ENCODE measurements at regions of chr6 and their contacts with region 1.

Region 1: GRCh38 chr6:110873981-110874879 is at the start of gene AMD1:
- DNase-seq: peak; percentile 99
- H3K4me3 ChIP-seq: peak within 1 kb of the TSS; percentile 83 to 98 (median 90)
- H3K27ac ChIP-seq: peak within 1 kb of the TSS; percentile 94 to 97 (median 97)
- H3K4me1 ChIP-seq: peaks cover 26 to 36% (median 29%) of the 10 kb centered on the region in 4 donors
- H3K27me3 ChIP-seq: no peaks in the 10 kb centered on the region
- CTCF ChIP-seq: no peak
- EP300 ChIP-seq: no peak
- POLR2A ChIP-seq: peak; percentile 97
- total RNA-seq, gene AMD1: 46.2 to 93.1 (median 59.6) TPM

Region 2: GRCh38 chr6:109690737-109691621 is 1183.3 kb before region 1 on chr6 and contains the starts of genes AK9 and FIG4:
- intact Hi-C with region 1: loop called (anchors 10 kb)
- DNase-seq: peak; percentile 97
- H3K4me3 ChIP-seq: peak within 1 kb of the TSS; percentile 74 to 86 (median 81)
- H3K27ac ChIP-seq: peak within 1 kb of the TSS; percentile 86 to 95 (median 91)
- H3K4me1 ChIP-seq: peaks cover 6 to 32% (median 28%) of the 10 kb centered on the region in 4 donors
- H3K27me3 ChIP-seq: no peaks in the 10 kb centered on the region
- CTCF ChIP-seq: peak; percentile 16 to 33 (median 17)
- EP300 ChIP-seq: no peak
- POLR2A ChIP-seq: no peak
- total RNA-seq, gene AK9: 8.4 to 15.0 (median 10.6) TPM
- total RNA-seq, gene FIG4: 12.3 to 19.9 (median 17.1) TPM

Region 3: GRCh38 chr6:110618591-110619267 is 255.5 kb before region 1 on chr6:
- intact Hi-C with region 1: no loop called
- DNase-seq: no peak
- H3K4me3 ChIP-seq: no peak overlapping the region
- H3K27ac ChIP-seq: no peak overlapping the region
- H3K4me1 ChIP-seq: peaks cover 0 to 18% (median 3%) of the 10 kb centered on the region in 4 donors
- H3K27me3 ChIP-seq: no peaks in the 10 kb centered on the region
- CTCF ChIP-seq: no peak
- EP300 ChIP-seq: no peak
- POLR2A ChIP-seq: no peak

Region 4: DNA sequence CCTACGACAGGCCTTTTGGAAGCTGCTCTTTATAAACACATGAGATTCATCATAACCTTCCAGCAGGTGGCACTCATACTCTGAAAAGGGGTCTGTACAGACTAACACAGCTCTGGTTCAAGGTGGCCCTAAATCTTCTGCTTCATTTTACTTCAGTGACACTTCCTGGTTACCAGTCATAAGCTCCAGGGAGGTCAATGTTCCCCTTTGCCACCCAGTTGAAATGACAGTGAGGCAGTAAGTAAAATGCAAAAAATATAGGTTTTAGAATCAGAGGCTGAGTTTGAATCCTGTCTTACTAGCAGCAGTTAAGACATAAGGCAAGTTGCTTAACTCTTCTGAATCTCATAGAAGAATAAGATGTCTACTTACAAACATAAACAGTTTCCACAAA is 191.8 kb before region 1 on chr6:
- intact Hi-C with region 1: loop called (anchors 5 kb)
- DNase-seq: no peak
- H3K4me3 ChIP-seq: no peak overlapping the region
- H3K27ac ChIP-seq: no peak overlapping the region
- H3K4me1 ChIP-seq: peaks cover 0 to 10% (median 5%) of the 10 kb centered on the region in 4 donors
- H3K27me3 ChIP-seq: no peaks in the 10 kb centered on the region
- CTCF ChIP-seq: peak; percentile 65 to 73 (median 71)
- EP300 ChIP-seq: no peak
- POLR2A ChIP-seq: no peak

Region 5: DNA sequence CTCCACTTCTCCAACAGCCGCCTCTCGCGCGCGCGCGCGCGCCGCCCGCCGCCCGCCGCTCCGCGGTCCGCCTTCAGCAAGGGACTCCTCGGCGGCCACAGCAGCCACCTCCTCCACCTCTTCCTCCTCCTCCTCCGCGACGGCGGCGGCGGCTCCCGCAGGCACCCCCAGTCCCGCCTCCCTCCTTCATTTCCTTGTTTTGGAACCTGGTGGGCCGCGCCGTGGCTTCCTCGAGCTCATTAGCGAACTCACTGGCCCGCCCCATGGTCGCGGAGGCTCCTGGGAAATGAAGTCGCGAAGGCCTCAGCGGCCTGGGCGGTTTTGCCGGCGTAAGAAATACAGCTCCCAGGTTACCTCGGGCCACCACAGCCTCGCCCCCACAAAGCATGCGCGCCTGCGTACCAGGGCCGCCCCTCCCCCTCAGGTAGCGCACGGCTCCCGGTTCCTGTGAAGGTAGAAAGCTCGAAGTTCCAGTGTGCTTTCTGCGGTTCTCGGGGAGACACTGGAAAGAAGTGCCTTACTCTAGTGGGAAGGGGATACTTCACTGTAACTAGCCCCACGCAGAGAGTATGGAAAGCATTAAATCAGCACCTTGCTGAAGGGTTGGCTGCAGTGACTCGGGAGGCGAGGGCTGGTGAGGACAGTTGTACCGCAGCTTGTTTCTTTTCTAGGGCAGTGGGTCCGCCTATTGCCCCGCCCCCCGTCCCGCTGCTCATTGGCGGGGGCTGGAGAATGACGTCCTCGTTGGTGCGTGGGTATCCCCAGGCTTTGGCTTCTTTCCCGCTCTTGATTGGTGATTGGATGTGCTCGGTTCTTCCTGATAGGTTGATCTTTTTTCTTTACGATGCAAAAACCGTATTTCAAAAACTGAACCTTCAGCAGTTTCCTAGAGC is 58.8 kb before region 1 on chr6 and contains the start of gene CDK19:
- intact Hi-C with region 1: loop called (anchors 2 kb)
- DNase-seq: peak; percentile 99
- H3K4me3 ChIP-seq: peak within 1 kb of the TSS; percentile 85 to 99 (median 93)
- H3K27ac ChIP-seq: peak within 1 kb of the TSS; percentile 94 to 98 (median 96)
- H3K4me1 ChIP-seq: peaks cover 14 to 20% (median 19%) of the 10 kb centered on the region in 4 donors
- H3K27me3 ChIP-seq: no peaks in the 10 kb centered on the region
- CTCF ChIP-seq: no peak
- EP300 ChIP-seq: no peak
- POLR2A ChIP-seq: peak; percentile 48
- total RNA-seq, gene CDK19: 12.0 to 15.0 (median 13.6) TPM

Region 6: DNA sequence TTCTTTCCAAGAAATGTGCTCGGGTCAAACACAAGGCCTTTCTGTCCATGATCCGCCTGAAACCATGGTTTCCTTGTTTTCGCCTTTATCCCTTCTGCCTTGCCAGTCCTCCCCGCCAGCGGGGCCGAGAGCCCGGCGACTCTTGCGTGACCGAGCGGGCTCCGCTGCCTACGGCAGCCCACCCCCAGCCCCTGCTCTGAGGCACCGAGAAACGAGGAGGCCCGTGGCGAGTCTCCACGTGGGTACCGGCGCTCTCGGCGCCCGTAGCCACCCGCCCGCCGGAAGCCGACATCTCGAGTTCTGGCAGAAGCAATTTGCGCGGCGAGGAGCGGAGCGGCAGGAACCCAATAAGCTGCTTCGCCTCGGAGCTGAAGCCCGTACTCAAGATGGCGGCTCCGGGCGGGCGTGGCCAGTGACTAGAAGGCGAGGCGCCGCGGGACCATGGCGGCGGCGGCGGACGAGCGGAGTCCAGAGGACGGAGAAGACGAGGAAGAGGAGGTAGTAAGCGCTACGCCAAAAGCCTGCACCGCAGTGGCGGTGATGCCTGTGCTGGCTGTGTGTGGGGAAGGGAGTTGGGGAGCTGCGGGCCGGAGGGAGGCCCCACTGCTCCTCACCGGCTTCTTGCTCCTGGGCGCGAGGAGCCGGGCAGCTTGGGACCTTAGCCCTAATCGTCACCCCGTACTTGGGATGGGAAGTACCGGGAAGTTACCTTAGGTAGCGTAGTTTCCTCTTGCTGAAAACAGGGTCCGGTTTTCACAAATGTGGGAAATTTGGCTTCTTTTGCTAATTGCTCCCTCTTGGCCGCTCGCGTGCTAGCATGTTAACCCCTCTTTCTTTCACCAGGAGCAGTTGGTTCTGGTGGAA is 84.3 kb after region 1 on chr6 and contains the start of gene GTF3C6:
- intact Hi-C with region 1: loop called (anchors 2 kb)
- DNase-seq: peak; percentile 97
- H3K4me3 ChIP-seq: peak within 1 kb of the TSS; percentile 79 to 85 (median 82)
- H3K27ac ChIP-seq: peak within 1 kb of the TSS; percentile 85 to 92 (median 85)
- H3K4me1 ChIP-seq: peaks cover 5 to 22% (median 19%) of the 10 kb centered on the region in 4 donors
- H3K27me3 ChIP-seq: no peaks in the 10 kb centered on the region
- CTCF ChIP-seq: no peak
- EP300 ChIP-seq: no peak
- POLR2A ChIP-seq: peak; percentile 22
- total RNA-seq, gene GTF3C6: 37.1 to 46.1 (median 42.6) TPM

Measured in esophagus muscularis mucosa (tissue), 4 donors.